ENCODE measurements at regions of chr5 and their contacts with region 1.

Region 1: DNA sequence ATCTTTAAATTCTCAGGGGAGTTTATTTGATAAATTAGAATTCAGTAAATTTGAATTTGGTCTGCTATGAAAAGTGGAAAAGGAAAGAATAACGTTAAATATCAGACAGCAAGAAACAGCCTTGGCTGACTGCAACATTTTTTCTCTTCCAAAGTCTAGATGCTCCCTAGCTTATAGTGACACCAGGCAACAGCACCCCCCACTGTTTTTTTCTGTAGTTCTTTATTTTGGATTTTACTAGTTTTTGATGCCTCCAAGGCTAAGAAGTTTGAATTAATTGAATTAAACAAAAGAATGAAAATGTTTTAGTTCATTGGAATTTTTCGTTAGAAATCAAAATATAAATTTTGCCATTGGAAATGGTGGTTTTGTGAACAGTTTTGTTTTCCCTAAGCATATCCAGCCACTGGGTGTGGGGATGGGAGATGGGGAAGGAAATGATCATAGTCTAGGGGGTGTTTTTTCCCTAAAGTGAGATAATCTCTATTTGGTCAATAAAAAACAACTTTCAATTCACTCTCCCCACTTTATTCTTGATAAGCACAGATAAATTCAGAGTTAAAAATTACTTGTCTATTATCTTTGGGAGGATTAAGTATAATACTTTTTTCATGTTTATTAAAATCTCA is 199.3 kb upstream of the CD180 start:
- DNase-seq: no peak
- H3K4me3 ChIP-seq: no peak overlapping the region
- H3K27ac ChIP-seq: no peak overlapping the region
- H3K4me1 ChIP-seq: no peaks in the 10 kb centered on the region
- H3K27me3 ChIP-seq: no peaks in the 10 kb centered on the region
- CTCF ChIP-seq: no peak

Region 2: DNA sequence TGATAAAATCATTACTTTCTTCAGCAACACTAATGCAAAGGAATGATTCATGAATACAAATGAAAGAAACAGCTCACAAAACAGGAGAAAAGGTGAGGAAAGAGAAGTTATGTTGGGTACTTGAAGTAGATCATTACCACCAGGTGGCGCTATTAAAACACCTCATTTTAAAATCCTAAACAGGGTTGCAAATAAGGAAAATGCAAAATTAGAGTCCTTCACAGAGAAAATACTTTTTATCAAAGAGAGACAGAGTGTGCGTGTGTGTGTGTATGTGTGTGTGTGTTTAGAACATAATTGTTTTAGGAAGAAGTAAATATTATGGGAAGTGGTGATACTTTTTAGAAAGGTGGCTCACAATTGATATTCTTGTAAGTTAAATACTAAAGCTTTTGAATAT is 149.8 kb before region 1 on chr5:
- intact Hi-C with region 1: loop called (anchors 5 kb)
- DNase-seq: no peak
- H3K4me3 ChIP-seq: no peak overlapping the region
- H3K27ac ChIP-seq: peak overlapping the region in 1 of 2 donors; percentile 75
- H3K4me1 ChIP-seq: peaks cover 11 to 18% of the 10 kb centered on the region in 2 donors
- H3K27me3 ChIP-seq: no peaks in the 10 kb centered on the region
- CTCF ChIP-seq: peak; percentile 59 to 79 (median 67)

Measured in ascending aorta (tissue), 2 donors.